ENCODE measurements at regions of chr1 and their contacts with region 1.

Region 1: GRCh38 chr1:37859507-37860345 is at the start of gene MTF1:
- DNase-seq: peak; percentile 98
- ATAC-seq: peak; percentile 100
- H3K4me3 Mint-ChIP-seq: peak within 1 kb of the TSS; percentile 91
- H3K27ac Mint-ChIP-seq: peak within 1 kb of the TSS; percentile 96
- H3K4me1 Mint-ChIP-seq: peaks cover 30% of the 10 kb centered on the region
- H3K27me3 Mint-ChIP-seq: no peaks in the 10 kb centered on the region
- total RNA-seq, gene MTF1: 22.4 to 27.7 TPM

Region 2: DNA sequence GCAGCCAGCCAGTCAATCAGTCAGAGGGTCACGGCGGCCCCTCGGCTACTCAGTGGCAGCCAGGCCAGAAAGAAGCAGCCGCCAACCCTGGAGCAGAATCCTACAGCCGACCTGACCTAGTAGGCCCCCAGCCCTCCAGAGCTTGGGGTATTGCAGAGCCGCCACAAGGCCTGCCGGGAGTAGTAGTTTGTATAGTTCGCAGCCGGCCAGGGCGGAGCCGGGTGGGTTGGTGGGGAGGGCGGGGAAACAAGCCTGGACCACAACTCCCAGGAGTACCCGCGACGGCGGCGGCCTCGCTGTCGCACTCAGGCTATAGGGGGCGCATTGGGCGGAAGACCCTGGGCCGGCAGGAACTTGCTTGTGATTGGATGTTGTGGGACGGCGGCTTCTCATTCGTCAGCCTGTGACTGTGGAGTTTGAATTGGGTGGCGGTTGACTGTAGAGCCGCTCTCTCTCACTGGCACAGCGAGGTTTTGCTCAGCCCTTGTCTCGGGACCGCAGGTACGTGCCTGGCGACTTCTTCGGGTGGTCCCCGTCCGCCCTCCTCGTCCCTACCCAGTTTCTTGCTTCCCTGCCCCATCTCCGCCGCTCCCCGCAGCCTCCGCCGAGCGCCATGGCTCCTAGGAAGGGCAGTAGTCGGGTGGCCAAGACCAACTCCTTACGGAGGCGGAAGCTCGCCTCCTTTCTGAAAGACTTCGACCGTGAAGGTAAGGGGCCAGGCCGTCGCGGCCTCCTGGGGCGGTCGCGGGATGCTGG is 167.5 kb before region 1 on chr1 and contains the start of gene CDCA8:
- CTCF ChIA-PET with region 1: interaction called, 27 read pairs
- POLR2A ChIA-PET with region 1: interaction called, 9 read pairs
- DNase-seq: peak; percentile 99
- ATAC-seq: peak; percentile 88
- H3K4me3 Mint-ChIP-seq: peak within 1 kb of the TSS; percentile 99
- H3K27ac Mint-ChIP-seq: peak within 1 kb of the TSS; percentile 97
- H3K4me1 Mint-ChIP-seq: peaks cover 54% of the 10 kb centered on the region
- H3K27me3 Mint-ChIP-seq: no peaks in the 10 kb centered on the region
- total RNA-seq, gene CDCA8: 97.3 to 102 TPM

Region 3: DNA sequence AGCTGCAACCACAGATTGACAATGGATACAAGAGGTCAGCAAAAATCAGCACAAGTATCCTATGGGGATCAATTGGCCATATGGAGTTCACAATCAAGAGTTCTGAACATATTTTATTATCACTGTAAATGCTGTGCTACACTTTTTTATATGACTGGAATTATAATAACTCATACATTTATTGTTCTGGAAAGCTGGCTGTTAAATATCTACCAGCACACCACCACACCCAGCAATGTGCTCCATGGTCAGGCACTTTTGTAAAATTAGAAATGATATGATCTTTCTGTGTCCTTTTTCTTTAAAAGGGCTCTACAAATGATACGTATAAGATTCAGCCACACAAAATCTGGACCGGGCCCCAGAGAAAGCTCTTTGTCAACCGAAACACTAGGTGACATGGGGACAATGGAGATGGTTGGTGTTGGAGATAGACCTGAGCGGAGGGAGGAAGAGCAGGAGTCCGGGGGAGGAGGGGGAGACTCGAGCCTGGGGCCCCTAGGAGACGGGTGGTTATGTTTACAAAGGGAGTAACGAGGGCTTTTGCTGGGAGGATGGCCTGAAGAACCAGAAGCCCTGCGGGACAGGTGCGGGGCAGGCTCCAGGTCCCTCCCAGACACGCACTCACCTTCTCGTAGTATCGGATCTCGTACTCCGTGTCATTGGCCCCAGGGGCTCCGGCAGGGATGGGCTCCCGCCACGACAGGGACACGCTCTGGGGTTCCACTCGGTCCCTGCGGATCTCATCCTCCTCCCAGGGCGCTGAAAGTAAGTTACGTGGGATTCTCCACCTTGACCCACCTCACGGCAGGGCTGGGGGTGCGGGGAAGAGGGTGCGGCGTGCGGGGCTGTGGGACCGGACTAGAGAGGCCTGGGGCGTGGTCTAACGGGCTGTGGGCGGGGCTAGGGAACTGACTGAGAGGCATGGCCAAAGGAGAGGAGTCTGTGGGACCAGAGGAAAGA is 124.8 kb before region 1 on chr1:
- CTCF ChIA-PET with region 1: no interaction called
- POLR2A ChIA-PET with region 1: no interaction called
- DNase-seq: no peak
- ATAC-seq: no peak
- H3K4me3 Mint-ChIP-seq: no peak overlapping the region
- H3K27ac Mint-ChIP-seq: no peak overlapping the region
- H3K4me1 Mint-ChIP-seq: no peaks in the 10 kb centered on the region
- H3K27me3 Mint-ChIP-seq: peaks cover 34% of the 10 kb centered on the region

Region 4: DNA sequence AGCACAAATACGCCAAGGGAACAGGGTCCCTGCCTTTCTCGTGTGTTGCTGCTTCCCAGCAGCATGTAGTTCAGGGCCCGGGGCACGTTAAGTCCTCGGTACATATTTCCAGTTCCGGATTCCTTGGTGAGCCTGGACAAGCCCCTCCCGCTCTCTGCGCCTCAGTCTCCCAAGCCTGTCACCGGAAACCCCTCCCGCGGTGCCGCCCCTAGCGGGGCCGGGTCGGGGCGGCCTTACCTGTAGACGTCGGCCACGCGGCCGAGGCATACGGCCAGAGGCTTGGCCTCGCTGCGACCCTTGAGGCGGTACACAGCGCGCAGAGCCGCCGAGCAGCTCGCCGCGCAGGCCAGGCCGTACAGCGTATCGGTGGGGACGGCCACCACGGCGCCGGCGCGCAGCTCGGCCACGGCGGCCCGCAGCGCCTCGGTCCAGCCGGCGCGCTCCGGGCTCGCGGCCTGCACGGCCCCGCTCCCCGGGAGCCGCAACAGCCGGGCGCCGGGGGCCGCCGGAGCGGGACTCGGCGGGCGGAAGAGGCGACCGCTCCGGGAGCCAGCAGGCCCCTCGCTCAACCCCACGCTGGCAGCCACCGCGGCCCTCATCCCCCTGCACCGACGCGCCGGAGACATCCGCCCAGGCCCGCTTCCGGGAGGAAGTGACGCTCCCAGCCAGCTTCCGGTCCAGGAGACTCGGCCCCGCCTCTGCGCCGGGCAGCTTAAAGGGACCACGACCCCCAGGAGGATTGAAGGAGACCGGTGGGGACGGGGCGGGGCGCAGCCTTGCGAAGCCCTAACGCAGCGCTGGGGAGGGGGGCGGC is 52.0 kb before region 1 on chr1 and contains the starts of genes C1orf122 and YRDC:
- CTCF ChIA-PET with region 1: interaction called, 46 read pairs
- POLR2A ChIA-PET with region 1: interaction called, 19 read pairs
- DNase-seq: peak; percentile 95
- ATAC-seq: peak; percentile 91
- H3K4me3 Mint-ChIP-seq: peak within 1 kb of the TSS; percentile 91
- H3K27ac Mint-ChIP-seq: peak within 1 kb of the TSS; percentile 98
- H3K4me1 Mint-ChIP-seq: peaks cover 34% of the 10 kb centered on the region
- H3K27me3 Mint-ChIP-seq: no peaks in the 10 kb centered on the region
- total RNA-seq, gene C1orf122: 19.1 to 22.2 TPM
- total RNA-seq, gene YRDC: 17.1 to 17.3 TPM

Region 5: DNA sequence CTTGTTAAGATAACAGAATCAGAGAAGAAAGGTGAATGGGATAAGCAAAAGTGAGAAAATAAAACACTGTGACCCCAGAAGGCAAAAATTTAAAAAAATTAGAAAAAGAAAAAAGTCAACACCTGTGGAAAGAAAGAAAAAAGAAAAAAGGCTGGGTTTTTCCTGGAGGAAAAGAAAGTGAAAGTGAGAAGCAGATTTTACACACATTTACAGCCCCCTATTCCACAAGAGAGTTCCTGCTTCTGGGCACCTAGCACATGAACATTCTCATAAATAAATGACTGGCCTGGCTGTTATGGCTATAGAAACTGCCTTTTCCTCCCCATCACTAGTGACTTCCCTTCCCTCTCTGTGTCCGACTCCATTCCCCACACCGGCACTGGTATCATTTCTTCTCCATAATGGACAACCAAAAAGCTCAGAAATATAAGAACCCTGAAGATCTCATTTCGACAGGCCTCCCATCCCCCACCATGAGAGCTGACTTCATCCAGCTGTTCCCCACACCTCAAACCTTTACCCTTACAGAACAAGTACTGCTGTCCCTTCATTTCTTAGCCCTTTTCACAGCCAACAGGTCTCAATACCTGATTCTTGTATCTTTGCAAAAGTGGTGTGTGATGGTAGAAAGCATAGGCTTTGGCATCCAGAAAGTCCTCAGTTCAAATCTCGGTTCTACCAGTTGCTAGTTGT is 12.9 kb before region 1 on chr1:
- CTCF ChIA-PET with region 1: interaction called, 51 read pairs
- POLR2A ChIA-PET with region 1: interaction called, 4 read pairs
- DNase-seq: peak; percentile 27
- ATAC-seq: peak; percentile 54
- H3K4me3 Mint-ChIP-seq: peak overlapping the region; percentile 74
- H3K27ac Mint-ChIP-seq: peak overlapping the region; percentile 84
- H3K4me1 Mint-ChIP-seq: peaks cover 38% of the 10 kb centered on the region
- H3K27me3 Mint-ChIP-seq: no peaks in the 10 kb centered on the region

Region 6: GRCh38 chr1:37875834-37876233 is 16.1 kb after region 1 on chr1:
- CTCF ChIA-PET with region 1: interaction called, 15 read pairs
- POLR2A ChIA-PET with region 1: interaction called, 5 read pairs
- DNase-seq: no peak
- ATAC-seq: no peak
- H3K4me3 Mint-ChIP-seq: no peak overlapping the region
- H3K27ac Mint-ChIP-seq: no peak overlapping the region
- H3K4me1 Mint-ChIP-seq: no peaks in the 10 kb centered on the region
- H3K27me3 Mint-ChIP-seq: no peaks in the 10 kb centered on the region

Region 7: GRCh38 chr1:37931361-37932158 is 71.8 kb after region 1 on chr1:
- CTCF ChIA-PET with region 1: interaction called, 14 read pairs
- POLR2A ChIA-PET with region 1: interaction called, 3 read pairs
- DNase-seq: peak; percentile 98
- ATAC-seq: peak; percentile 97
- H3K4me3 Mint-ChIP-seq: peak overlapping the region; percentile 91
- H3K27ac Mint-ChIP-seq: peak overlapping the region; percentile 78
- H3K4me1 Mint-ChIP-seq: peaks cover 42% of the 10 kb centered on the region
- H3K27me3 Mint-ChIP-seq: no peaks in the 10 kb centered on the region

Region 8: DNA sequence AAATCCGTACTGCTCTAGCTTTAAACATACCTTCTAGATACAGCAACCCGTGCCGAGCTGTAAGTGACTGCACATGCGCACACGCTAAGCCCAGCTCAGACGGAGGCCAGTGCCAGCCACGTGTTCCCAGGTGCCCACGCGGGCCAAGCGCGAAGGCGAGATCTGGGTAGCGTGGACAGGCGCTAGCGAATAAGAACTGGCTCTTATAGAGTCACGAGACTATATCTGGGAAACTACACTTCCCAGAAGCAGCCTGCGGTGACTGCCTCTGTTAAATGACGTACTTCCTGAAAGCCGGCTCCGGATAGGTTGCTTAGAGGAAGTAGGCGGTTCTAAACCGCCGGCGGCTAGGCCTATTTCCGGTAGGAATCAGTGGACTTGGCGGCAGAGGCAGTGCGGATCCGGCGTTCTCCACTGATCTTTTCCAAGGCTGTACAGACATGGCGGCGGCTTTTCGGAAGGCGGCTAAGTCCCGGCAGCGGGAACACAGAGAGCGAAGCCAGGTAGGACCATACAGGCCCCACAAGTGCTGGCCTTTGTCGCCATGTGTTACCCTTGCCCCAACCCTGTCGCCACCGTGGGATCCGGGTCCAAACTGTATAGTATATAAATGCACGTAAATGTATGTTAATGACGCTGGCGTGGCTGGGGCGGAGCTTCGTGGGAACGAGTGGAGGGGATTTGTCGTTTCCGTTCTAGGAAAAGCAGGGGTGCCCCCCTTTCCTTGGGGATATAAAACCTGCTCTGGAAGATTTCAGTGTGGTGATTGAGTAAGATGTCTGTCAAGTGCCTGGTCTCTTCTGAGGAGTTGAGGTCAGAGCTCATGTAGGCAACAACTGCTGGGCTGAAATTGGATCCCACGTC is 152.9 kb after region 1 on chr1 and contains the start of gene UTP11:
- CTCF ChIA-PET with region 1: interaction called, 11 read pairs
- POLR2A ChIA-PET with region 1: no interaction called
- DNase-seq: peak; percentile 96
- ATAC-seq: peak; percentile 92
- H3K4me3 Mint-ChIP-seq: peak within 1 kb of the TSS; percentile 98
- H3K27ac Mint-ChIP-seq: peak within 1 kb of the TSS; percentile 97
- H3K4me1 Mint-ChIP-seq: peaks cover 55% of the 10 kb centered on the region
- H3K27me3 Mint-ChIP-seq: no peaks in the 10 kb centered on the region
- total RNA-seq, gene UTP11: 39.0 to 39.5 TPM

Measured in activated CD8-positive, alpha-beta T cell treated with anti-CD3 and anti-CD28 coated beads, Interleukin-2, amount 10 ng/mL, durations not matched to agents 7 days and 5 days (primary cell).